Tibial artery (tissue), 4 donors: ENCODE measurements at regions of chr3 and their contacts with region 1.

Region 1: GRCh38 chr3:136752422-136753325 is 496 bp upstream of the STAG1 start:
- DNase-seq: peak; percentile 98 to 99
- H3K4me3 ChIP-seq: peak overlapping the region; percentile 77 to 91
- H3K27ac ChIP-seq: peak overlapping the region; percentile 95 to 98
- H3K4me1 ChIP-seq: peaks cover 0 to 35% (median 25%) of the 10 kb centered on the region in 4 donors
- H3K27me3 ChIP-seq: no peaks in the 10 kb centered on the region
- CTCF ChIP-seq: peak in 1 of 2 experiments; percentile 97

Region 2: DNA sequence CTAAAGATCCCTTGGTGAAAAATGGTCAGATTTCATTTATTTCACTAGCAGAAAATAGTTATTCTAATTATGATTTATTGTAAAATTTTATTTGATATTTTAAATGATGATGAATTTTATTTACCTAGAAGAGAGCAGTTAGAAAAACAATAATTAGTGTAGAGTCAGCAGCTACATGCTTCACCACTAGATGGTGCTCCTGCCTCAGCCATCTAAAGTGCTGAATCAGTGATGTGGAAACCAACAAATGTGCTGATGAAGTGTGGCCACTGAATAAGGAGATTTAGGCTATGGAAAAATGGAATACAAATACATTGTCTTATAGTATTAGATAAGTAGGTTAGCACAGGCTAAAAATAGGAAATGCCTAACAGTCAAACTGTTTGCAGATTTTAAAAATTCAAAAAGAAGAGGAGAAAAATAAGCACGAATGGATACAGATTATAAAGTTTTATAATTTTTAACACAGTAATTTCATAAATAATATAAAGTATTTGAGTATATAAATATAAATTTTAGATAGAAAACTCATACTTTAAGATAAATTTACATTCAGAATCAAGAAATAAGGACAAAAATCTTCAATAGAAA is 677.4 kb before region 1 on chr3:
- intact Hi-C with region 1: loop called (anchors 5 kb)
- DNase-seq: peak; percentile 74 to 78
- H3K4me3 ChIP-seq: no peak overlapping the region
- H3K27ac ChIP-seq: no peak overlapping the region
- H3K4me1 ChIP-seq: peaks cover 0 to 24% (median 15%) of the 10 kb centered on the region in 4 donors
- H3K27me3 ChIP-seq: no peaks in the 10 kb centered on the region
- CTCF ChIP-seq: peak; percentile 87 to 92

Region 3: GRCh38 chr3:136196401-136197158 is 556.1 kb before region 1 on chr3:
- intact Hi-C with region 1: loop called (anchors 5 kb)
- DNase-seq: peak; percentile 99
- H3K4me3 ChIP-seq: peak overlapping the region; percentile 92 to 98
- H3K27ac ChIP-seq: peak overlapping the region; percentile 100
- H3K4me1 ChIP-seq: peaks cover 0 to 27% (median 13%) of the 10 kb centered on the region in 4 donors
- H3K27me3 ChIP-seq: no peaks in the 10 kb centered on the region
- CTCF ChIP-seq: no peak

Region 4: DNA sequence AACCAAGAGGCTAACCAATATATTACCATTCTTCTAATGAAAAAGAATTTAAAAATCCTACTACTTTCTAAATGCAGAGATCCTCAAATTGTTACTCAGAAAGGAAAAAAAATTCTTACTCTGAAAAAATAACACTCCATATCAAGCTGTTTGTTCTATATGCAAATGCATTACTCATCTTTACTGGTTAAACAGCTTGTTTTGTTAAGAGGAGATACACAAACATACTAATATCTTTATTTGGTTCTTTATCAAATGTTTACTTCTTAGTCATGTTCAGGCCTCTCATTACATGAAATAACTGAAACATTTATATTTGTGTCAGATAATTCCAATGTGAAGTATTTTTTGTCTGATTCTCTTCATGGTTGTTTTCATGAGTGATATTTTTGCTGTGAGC is 355.8 kb before region 1 on chr3:
- intact Hi-C with region 1: loop called (anchors 10 kb)
- DNase-seq: no peak
- H3K4me3 ChIP-seq: no peak overlapping the region
- H3K27ac ChIP-seq: no peak overlapping the region
- H3K4me1 ChIP-seq: peaks cover 0 to 13% (median 1%) of the 10 kb centered on the region in 4 donors
- H3K27me3 ChIP-seq: no peaks in the 10 kb centered on the region
- CTCF ChIP-seq: no peak

Region 5: GRCh38 chr3:137013955-137014688 is 261.4 kb after region 1 on chr3:
- intact Hi-C with region 1: loop called (anchors 5 kb)
- DNase-seq: peak; percentile 93 to 94
- H3K4me3 ChIP-seq: peak overlapping the region; percentile 47 to 60
- H3K27ac ChIP-seq: peak overlapping the region; percentile 80 to 81
- H3K4me1 ChIP-seq: peaks cover 0 to 8% (median 4%) of the 10 kb centered on the region in 4 donors
- H3K27me3 ChIP-seq: no peaks in the 10 kb centered on the region
- CTCF ChIP-seq: peak; percentile 85 to 96